ENCODE measurements at regions of chr4 and their contacts with region 1.

Region 1: DNA sequence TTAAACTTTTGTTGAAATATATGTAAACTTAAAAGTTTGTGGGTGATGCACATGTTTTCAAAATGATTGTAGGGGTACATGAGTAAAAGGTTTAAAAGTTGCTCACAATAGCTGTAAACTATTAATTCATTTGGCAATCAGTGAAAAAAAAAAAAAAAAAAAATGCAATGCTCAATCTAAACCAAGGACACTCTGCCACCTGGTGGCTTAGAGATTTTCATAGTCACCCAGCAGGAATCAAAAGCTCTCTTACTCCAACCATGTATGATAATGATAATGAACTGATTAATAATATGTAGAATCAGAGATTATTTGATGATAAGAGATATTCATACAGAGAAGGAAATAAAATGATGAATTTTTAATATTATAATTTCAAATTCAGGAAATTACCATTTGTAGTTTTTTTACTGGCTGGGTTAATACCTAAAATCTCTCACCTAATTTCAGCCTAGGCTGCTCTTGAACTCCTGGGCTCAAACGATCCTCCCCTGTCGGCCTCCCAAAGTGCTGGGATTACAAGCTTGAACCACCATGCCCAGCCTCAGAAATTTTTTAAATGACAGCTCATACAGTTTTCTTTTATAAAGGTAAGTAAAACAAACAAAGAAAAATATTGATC is 46.9 kb upstream of the SLC25A4 start:
- DNase-seq: peak; percentile 60 to 77 (median 69)
- H3K4me3 ChIP-seq: no peak overlapping the region
- H3K27ac ChIP-seq: no peak overlapping the region
- H3K4me1 ChIP-seq: no peaks in the 10 kb centered on the region
- H3K27me3 ChIP-seq: no peaks in the 10 kb centered on the region

Region 2: GRCh38 chr4:184825896-184826690 is 270.1 kb before region 1 on chr4 and contains the start of gene ACSL1:
- CTCF ChIA-PET with region 1: no interaction called
- POLR2A ChIA-PET with region 1: no interaction called
- DNase-seq: peak; percentile 74 to 89 (median 86)
- H3K4me3 ChIP-seq: peak within 1 kb of the TSS; percentile 70 to 89 (median 74)
- H3K27ac ChIP-seq: peak within 1 kb of the TSS in 1 of 2 experiments; percentile 68
- H3K4me1 ChIP-seq: peaks cover 14 to 46% (median 41%) of the 10 kb centered on the region in 4 experiments
- H3K27me3 ChIP-seq: no peaks in the 10 kb centered on the region

Region 3: DNA sequence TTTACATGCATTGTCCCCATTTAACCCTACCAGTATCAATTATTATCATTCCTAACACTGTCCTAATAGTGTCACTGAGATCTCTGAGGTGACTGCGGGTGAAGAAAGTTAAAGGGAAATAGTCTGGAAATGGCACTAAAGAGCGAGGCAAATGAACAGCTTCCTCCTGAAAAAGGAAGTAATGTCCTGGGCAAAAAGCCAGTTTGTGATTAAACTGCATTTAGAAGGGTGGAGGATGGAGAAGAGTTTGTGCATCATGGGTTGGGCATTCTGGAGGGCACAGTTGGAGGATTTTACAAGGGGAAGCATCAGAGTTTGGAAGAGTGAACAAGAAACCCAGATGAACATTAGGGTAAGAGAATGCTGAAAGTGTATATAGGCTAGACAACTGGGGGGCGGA is 13.6 kb before region 1 on chr4:
- CTCF ChIA-PET with region 1: interaction called, 10 read pairs
- POLR2A ChIA-PET with region 1: no interaction called
- DNase-seq: peak; percentile 37 to 66 (median 59)
- H3K4me3 ChIP-seq: no peak overlapping the region
- H3K27ac ChIP-seq: no peak overlapping the region
- H3K4me1 ChIP-seq: no peaks in the 10 kb centered on the region
- H3K27me3 ChIP-seq: peaks cover 0 to 7% (median 0%) of the 10 kb centered on the region in 5 experiments

Region 4: GRCh38 chr4:185106353-185106752 is 10.2 kb after region 1 on chr4:
- CTCF ChIA-PET with region 1: interaction called, 17 read pairs
- POLR2A ChIA-PET with region 1: no interaction called
- DNase-seq: no peak
- H3K4me3 ChIP-seq: no peak overlapping the region
- H3K27ac ChIP-seq: no peak overlapping the region
- H3K4me1 ChIP-seq: no peaks in the 10 kb centered on the region
- H3K27me3 ChIP-seq: peaks cover 0 to 10% (median 0%) of the 10 kb centered on the region in 5 experiments

Region 5: DNA sequence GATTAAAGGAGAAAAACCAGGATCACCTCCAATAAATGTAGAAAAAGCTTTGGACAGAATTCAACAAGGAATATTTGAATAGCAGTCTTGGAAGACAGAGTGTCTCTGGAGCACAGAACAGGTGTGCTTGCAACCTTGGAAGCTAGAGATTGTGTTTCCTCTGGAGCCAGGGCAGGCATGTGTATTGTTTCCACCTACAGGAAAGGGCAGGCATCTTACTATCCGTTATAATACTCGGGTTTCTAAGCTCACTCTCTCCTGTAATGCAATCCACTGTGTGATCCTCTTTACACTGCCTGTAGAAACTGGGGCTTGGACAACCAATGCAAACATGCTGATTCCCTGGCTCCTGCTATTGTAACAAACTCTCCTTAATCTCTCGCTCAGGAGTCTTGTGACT is 361.0 kb after region 1 on chr4:
- CTCF ChIA-PET with region 1: no interaction called
- POLR2A ChIA-PET with region 1: no interaction called
- DNase-seq: no peak
- H3K4me3 ChIP-seq: no peak overlapping the region
- H3K27ac ChIP-seq: no peak overlapping the region
- H3K4me1 ChIP-seq: no peaks in the 10 kb centered on the region
- H3K27me3 ChIP-seq: peaks cover 0 to 16% (median 4%) of the 10 kb centered on the region in 5 experiments